K562 (cell line): ENCODE measurements at regions of chr3 and their contacts with region 1.

Region 1: DNA sequence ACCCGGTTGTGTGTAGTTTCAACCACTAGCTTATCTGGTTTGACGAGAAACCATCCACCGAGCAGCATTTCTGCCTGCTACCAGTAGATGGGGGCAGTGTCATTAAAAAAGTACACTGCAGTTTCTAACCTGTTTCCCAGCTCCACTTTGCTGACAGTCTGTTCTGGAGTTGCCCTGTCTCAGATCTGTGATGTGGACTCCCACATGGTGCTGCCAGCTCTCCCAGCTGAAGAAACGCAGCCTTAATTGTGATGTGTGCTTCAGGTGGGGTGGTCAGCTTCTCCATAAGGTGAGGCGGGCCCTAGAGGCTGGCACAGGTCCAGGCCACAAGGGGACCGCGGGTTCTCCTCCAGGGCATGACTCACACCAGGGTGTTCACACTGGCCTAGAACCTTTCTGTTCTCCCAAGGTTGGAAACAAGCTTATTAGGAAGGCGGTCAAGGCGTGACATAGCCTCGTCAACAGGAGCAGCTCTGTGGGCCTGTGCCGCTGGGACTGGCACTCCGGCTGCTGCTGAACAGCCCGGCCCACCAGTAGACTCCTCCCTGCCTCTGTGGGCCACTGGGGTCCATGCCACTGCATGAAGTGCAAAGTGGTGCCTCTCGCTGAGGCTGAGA is 2.9 kb upstream of the FAM43A start:
- DNase-seq: peak; percentile 73 to 86 (median 80)
- ATAC-seq: peak; percentile 93
- H3K4me3 ChIP-seq: no peak overlapping the region
- H3K27ac ChIP-seq: no peak overlapping the region
- H3K4me1 ChIP-seq: peaks cover 11 to 19% of the 10 kb centered on the region in 2 experiments
- H3K27me3 ChIP-seq: peaks cover 0 to 17% of the 10 kb centered on the region in 2 experiments; a peak in 3 of 5 replicates
- CTCF ChIP-seq: peak; percentile 86 to 97 (median 90)
- EP300 ChIP-seq: no peak
- POLR2A ChIP-seq: no peak
- RAD21 ChIP-seq: peak; percentile 94 to 96

Region 2: GRCh38 chr3:194671900-194672808 is 10.6 kb before region 1 on chr3 and contains the start of gene LSG1:
- CTCF ChIA-PET with region 1: interaction called, 3 read pairs
- POLR2A ChIA-PET with region 1: interaction called, 15 read pairs
- in situ Hi-C with region 1: no loop called
- intact Hi-C with region 1: no loop called
- DNase-seq: peak; percentile 84 to 98 (median 87)
- ATAC-seq: peak; percentile 98
- H3K4me3 ChIP-seq: peak within 1 kb of the TSS; percentile 100
- H3K27ac ChIP-seq: peak within 1 kb of the TSS; percentile 92
- H3K4me1 ChIP-seq: peaks cover 8 to 10% of the 10 kb centered on the region in 2 experiments; a peak in 3 of 5 replicates
- H3K27me3 ChIP-seq: no peaks in the 10 kb centered on the region
- CTCF ChIP-seq: no peak
- EP300 ChIP-seq: 0 out of 2 replicates have a peak, but pooled peaks have one; percentile 41
- POLR2A ChIP-seq: peak; percentile 77
- RAD21 ChIP-seq: no peak
- polyA plus RNA-seq, gene LSG1: 14.9 to 23.0 TPM

Region 3: GRCh38 chr3:194928227-194928626 is 245.4 kb after region 1 on chr3:
- CTCF ChIA-PET with region 1: no interaction called
- POLR2A ChIA-PET with region 1: no interaction called
- in situ Hi-C with region 1: no loop called
- intact Hi-C with region 1: no loop called
- DNase-seq: no peak
- ATAC-seq: no peak
- H3K4me3 ChIP-seq: no peak overlapping the region
- H3K27ac ChIP-seq: no peak overlapping the region
- H3K4me1 ChIP-seq: no peaks in the 10 kb centered on the region
- H3K27me3 ChIP-seq: peaks cover 7 to 13% of the 10 kb centered on the region in 2 experiments; a peak in 3 of 5 replicates
- CTCF ChIP-seq: no peak
- EP300 ChIP-seq: no peak
- POLR2A ChIP-seq: no peak
- RAD21 ChIP-seq: no peak

Region 4: DNA sequence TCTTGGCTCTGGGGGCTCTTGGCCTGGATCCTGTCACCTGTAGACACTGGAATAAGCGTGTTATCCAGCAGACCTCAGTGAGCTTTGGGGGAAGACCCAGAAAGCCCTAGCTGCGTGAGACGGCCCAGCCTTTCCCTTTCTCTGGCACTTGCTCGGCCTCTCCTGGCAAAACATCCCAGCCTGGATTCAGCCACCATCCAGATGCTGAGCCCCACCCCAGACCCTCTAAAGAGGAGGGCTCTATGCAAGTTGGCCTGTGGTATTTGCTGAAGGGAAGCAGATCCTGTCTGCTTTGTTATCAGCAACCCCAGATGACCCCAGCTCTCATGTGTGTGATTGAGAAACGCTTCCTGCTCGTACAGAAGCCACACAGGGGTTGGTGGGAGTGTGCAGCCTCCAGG is 270.0 kb after region 1 on chr3:
- CTCF ChIA-PET with region 1: no interaction called
- POLR2A ChIA-PET with region 1: no interaction called
- in situ Hi-C with region 1: no loop called
- intact Hi-C with region 1: loop called (anchors 10 kb)
- DNase-seq: no peak
- ATAC-seq: peak; percentile 23; the same call in 1 of the 3 replicates
- H3K4me3 ChIP-seq: no peak overlapping the region
- H3K27ac ChIP-seq: no peak overlapping the region
- H3K4me1 ChIP-seq: no peaks in the 10 kb centered on the region; a peak in 1 of 5 replicates
- H3K27me3 ChIP-seq: peaks cover 29 to 64% of the 10 kb centered on the region in 2 experiments
- CTCF ChIP-seq: no peak
- EP300 ChIP-seq: no peak
- POLR2A ChIP-seq: no peak
- RAD21 ChIP-seq: no peak

Region 5: GRCh38 chr3:195106418-195106906 is 423.7 kb after region 1 on chr3:
- CTCF ChIA-PET with region 1: interaction called, 5 read pairs
- POLR2A ChIA-PET with region 1: no interaction called
- in situ Hi-C with region 1: loop called (anchors 10 kb)
- intact Hi-C with region 1: loop called (anchors 1 kb)
- DNase-seq: peak; percentile 78 to 89 (median 82)
- ATAC-seq: peak; percentile 95
- H3K4me3 ChIP-seq: no peak overlapping the region
- H3K27ac ChIP-seq: no peak overlapping the region
- H3K4me1 ChIP-seq: peaks cover 14 to 15% of the 10 kb centered on the region in 2 experiments
- H3K27me3 ChIP-seq: no peaks in the 10 kb centered on the region
- CTCF ChIP-seq: peak; percentile 85 to 89 (median 88)
- EP300 ChIP-seq: no peak
- POLR2A ChIP-seq: no peak
- RAD21 ChIP-seq: peak; percentile 87 to 90

Region 6: GRCh38 chr3:195259475-195260279 is 576.9 kb after region 1 on chr3:
- CTCF ChIA-PET with region 1: interaction called, 19 read pairs
- POLR2A ChIA-PET with region 1: interaction called, 4 read pairs
- in situ Hi-C with region 1: no loop called
- intact Hi-C with region 1: loop called (anchors 1 kb)
- DNase-seq: peak; percentile 91 to 97 (median 95)
- ATAC-seq: peak; percentile 90
- H3K4me3 ChIP-seq: peak overlapping the region; percentile 55
- H3K27ac ChIP-seq: peak overlapping the region; percentile 89
- H3K4me1 ChIP-seq: peaks cover 14 to 41% of the 10 kb centered on the region in 2 experiments
- H3K27me3 ChIP-seq: no peaks in the 10 kb centered on the region
- CTCF ChIP-seq: peak; percentile 46 to 73 (median 68); a peak in 5 of 6 replicates
- EP300 ChIP-seq: no peak; the same call in 1 of the 2 replicates
- POLR2A ChIP-seq: no peak; the same call in none of the 2 replicates
- RAD21 ChIP-seq: peak; percentile 90 to 96

Region 7: GRCh38 chr3:195271116-195271858 is 588.5 kb after region 1 on chr3 and contains the start of gene XXYLT1:
- CTCF ChIA-PET with region 1: no interaction called
- POLR2A ChIA-PET with region 1: no interaction called
- in situ Hi-C with region 1: loop called (anchors 5 kb)
- intact Hi-C with region 1: no loop called
- DNase-seq: peak; percentile 92 to 93 (median 92)
- ATAC-seq: peak; percentile 93
- H3K4me3 ChIP-seq: peak within 1 kb of the TSS; percentile 57
- H3K27ac ChIP-seq: peak within 1 kb of the TSS; percentile 66
- H3K4me1 ChIP-seq: peaks cover 19 to 22% of the 10 kb centered on the region in 2 experiments
- H3K27me3 ChIP-seq: no peaks in the 10 kb centered on the region
- CTCF ChIP-seq: peak; percentile 96 to 99 (median 99)
- EP300 ChIP-seq: no peak
- POLR2A ChIP-seq: peak; percentile 41
- RAD21 ChIP-seq: peak; percentile 98 to 99
- polyA plus RNA-seq, gene XXYLT1: 1.9 to 2.9 TPM

Region 8: DNA sequence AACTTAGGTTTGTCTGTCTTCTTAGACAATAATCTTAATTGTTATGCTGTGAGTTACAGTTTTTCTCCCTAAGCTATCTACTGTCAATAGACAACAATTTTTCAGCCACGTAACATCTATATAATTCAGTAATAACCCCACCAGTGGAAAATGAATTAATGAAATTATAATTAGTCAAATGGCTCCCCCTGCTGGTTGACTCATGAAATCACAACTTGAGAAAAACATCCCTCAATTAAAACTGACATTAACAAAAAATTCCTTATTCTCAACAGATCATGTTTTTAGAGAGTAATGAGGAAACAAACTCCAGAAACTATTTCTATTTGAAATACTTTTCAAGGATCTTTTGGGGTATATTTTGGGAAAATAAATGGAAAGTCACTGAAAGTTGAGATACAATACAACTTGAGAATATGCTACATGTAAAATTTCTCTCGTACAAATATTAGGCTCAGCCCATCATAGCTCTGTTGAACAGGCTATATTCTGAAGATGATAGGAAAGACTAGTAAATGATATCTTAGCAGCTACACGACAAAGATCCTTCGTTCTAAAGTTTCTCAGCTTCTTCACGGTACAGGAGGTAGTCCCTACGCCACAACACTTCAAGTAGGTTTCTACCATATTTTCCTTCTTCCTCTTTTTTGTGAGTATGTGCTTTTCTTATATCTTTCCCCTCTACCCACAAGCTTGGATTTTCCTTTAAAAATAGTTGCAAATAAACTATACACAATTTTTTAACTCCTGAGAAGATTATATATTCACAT is 839.6 kb after region 1 on chr3:
- CTCF ChIA-PET with region 1: interaction called, 3 read pairs
- POLR2A ChIA-PET with region 1: no interaction called
- in situ Hi-C with region 1: loop called (anchors 10 kb)
- intact Hi-C with region 1: loop called (anchors 1 kb)
- DNase-seq: peak; percentile 25 to 51 (median 42)
- ATAC-seq: no peak
- H3K4me3 ChIP-seq: no peak overlapping the region
- H3K27ac ChIP-seq: no peak overlapping the region
- H3K4me1 ChIP-seq: peaks cover 4 to 5% of the 10 kb centered on the region in 2 experiments; a peak in 1 of 5 replicates
- H3K27me3 ChIP-seq: no peaks in the 10 kb centered on the region
- CTCF ChIP-seq: peak; percentile 38 to 78 (median 48); a peak in 3 of 6 replicates
- EP300 ChIP-seq: no peak
- POLR2A ChIP-seq: no peak
- RAD21 ChIP-seq: peak; percentile 90 to 92